ENCODE measurements at regions of chr9 and their contacts with region 1.

Region 1: GRCh38 chr9:121550569-121551512 is 51.2 kb upstream of the GGTA1 start:
- DNase-seq: peak; percentile 58

Region 2: GRCh38 chr9:121650217-121651007 is 99.6 kb after region 1 on chr9:
- in situ Hi-C with region 1: loop called (anchors 25 kb)
- DNase-seq: peak; percentile 7